Stomach (tissue), 19 donors: ENCODE measurements at regions of chr4 and their contacts with region 1.

Region 1: DNA sequence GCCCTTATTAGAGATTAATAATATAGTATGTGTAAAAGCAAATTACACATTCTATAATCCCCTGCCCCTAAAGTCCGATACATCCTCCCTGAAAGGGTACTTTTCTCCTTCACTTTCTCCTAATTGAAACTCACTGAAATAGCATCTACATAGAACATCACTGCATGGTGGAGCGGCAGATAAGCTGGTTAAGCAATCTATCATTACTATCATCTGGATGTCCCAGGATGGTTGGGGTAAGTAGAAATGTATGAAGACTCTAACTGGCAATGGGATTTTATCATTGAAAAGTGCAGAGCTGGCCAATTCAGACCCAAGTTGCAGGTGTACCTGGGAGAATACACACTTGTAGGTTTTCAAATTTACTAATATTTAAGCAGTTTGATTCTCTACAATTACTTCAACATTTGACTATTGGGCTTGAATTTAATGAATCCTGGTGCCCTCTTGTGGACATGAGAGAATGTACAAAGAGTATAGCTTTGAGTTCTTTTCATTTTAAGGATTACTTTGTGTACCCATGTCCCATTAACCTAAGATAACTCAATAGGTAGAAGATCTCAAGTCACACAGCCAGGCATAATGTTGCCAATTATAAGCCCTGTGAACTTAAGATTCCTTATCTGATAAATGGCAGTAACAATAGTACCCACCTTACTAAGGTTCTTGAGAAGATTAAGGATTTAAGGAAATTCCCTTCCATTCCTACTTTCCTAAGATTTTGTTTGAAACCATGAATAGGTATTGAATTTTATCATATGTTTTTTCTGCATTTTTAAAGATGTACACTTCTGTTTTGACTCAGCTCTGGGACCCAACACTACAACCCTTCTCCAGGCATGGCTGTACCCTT is 69.8 kb downstream of the SHROOM3 start:
- DNase-seq: peak in 1 of 2 donors; percentile 76
- H3K4me3 ChIP-seq: no peak overlapping the region
- H3K27ac ChIP-seq: no peak overlapping the region
- H3K4me1 ChIP-seq: no peaks in the 10 kb centered on the region
- H3K27me3 ChIP-seq: no peaks in the 10 kb centered on the region
- CTCF ChIP-seq: peak in 5 of 7 experiments; percentile 38 to 68 (median 62)
- EP300 ChIP-seq: no peak
- POLR2A ChIP-seq: no peak

Region 2: DNA sequence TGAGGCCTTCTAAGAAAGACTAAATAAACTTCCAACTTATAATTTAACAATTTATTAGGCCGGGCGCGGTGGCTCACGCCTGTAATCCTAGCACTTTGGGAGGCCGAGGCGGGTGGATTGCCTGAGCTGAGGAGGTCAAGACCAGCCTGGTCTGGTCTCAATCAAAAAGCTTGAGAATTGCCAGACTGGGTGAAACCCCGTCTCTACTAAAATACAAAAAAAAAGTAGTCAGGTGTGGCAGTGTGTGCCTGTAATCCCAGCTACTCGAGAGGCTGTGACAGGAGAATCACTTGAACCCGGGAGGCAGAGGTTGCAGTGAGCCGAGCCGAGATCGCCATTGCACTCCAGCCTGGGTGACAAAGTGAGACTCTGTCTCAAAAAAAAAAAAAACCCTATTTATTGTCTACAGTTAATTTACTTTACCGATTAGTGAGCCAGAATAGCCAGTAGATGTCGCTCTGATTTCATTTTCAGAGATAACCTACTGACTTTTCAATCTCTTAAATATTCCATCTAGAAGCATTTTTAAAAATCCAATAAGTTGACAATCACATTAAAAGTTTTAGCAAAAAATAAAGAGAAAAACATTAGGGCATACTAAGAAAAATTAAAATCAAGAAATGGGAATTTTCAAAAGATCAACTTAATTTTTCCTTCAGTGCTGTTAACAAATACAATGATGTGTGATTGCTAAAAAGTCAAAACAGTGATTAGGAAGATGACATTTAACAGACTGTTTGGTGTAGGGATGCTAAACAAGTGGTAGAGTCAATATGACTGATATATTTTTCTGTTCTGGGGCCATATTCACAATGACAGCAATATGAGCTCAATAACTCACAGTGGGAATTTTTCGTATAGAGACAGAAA is 74.1 kb before region 1 on chr4:
- intact Hi-C with region 1: loop called (anchors 5 kb)
- DNase-seq: peak in 1 of 2 donors; percentile 82
- H3K4me3 ChIP-seq: no peak overlapping the region
- H3K27ac ChIP-seq: no peak overlapping the region
- H3K4me1 ChIP-seq: peaks cover 0 to 22% (median 6%) of the 10 kb centered on the region in 4 donors
- H3K27me3 ChIP-seq: no peaks in the 10 kb centered on the region
- CTCF ChIP-seq: peak in 5 of 7 experiments; percentile 29 to 64 (median 58)
- EP300 ChIP-seq: no peak
- POLR2A ChIP-seq: no peak